ENCODE measurements at regions of chr11 and their contacts with region 1.

Region 1: GRCh38 chr11:17230867-17231851 is 23.4 kb upstream of the PIK3C2A start:
- DNase-seq: peak in 2 of 3 donors; percentile 29 to 39
- H3K4me3 ChIP-seq: no peak overlapping the region
- H3K27ac ChIP-seq: no peak overlapping the region
- H3K4me1 ChIP-seq: peaks cover 0 to 6% (median 3%) of the 10 kb centered on the region in 4 experiments
- H3K27me3 ChIP-seq: no peaks in the 10 kb centered on the region

Region 2: GRCh38 chr11:17116121-17116520 is 115.0 kb before region 1 on chr11:
- CTCF ChIA-PET with region 1: no interaction called
- POLR2A ChIA-PET with region 1: no interaction called
- DNase-seq: peak in 2 of 3 donors; percentile 6 to 10
- H3K4me3 ChIP-seq: no peak overlapping the region
- H3K27ac ChIP-seq: no peak overlapping the region
- H3K4me1 ChIP-seq: no peaks in the 10 kb centered on the region
- H3K27me3 ChIP-seq: no peaks in the 10 kb centered on the region

Region 3: GRCh38 chr11:17197431-17197898 is 33.7 kb before region 1 on chr11:
- CTCF ChIA-PET with region 1: no interaction called
- POLR2A ChIA-PET with region 1: no interaction called
- DNase-seq: no peak
- H3K4me3 ChIP-seq: no peak overlapping the region
- H3K27ac ChIP-seq: no peak overlapping the region
- H3K4me1 ChIP-seq: no peaks in the 10 kb centered on the region
- H3K27me3 ChIP-seq: no peaks in the 10 kb centered on the region

Region 4: GRCh38 chr11:17276236-17277023 is 45.3 kb after region 1 on chr11 and contains the start of gene NUCB2:
- CTCF ChIA-PET with region 1: interaction called, 11 read pairs
- POLR2A ChIA-PET with region 1: interaction called, 3 read pairs
- DNase-seq: peak; percentile 96 to 98 (median 98)
- H3K4me3 ChIP-seq: peak within 1 kb of the TSS; percentile 77 to 99 (median 93)
- H3K27ac ChIP-seq: peak within 1 kb of the TSS; percentile 86 to 93
- H3K4me1 ChIP-seq: peaks cover 26 to 76% (median 57%) of the 10 kb centered on the region in 4 experiments
- H3K27me3 ChIP-seq: no peaks in the 10 kb centered on the region

Region 5: DNA sequence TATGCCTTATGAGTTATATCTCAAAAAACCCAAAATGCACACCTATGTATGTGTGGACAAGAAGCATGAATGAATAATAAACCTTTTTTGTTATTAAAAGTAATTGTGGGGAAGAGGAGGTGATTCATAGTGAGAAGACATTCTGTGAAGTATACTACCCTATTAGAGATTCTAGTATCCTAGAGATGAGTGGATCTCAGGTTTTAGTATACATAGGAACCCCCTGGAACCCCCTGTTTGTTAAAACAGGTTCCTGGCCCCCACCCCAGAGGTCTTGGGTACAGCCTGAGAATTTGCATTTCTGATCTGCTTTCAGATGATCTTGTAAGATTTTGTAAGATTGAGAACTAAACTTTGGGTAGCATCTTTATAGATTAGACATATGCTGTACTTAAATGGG is 62.9 kb after region 1 on chr11:
- CTCF ChIA-PET with region 1: interaction called, 11 read pairs
- POLR2A ChIA-PET with region 1: no interaction called
- DNase-seq: no peak
- H3K4me3 ChIP-seq: no peak overlapping the region
- H3K27ac ChIP-seq: peak overlapping the region; percentile 6 to 28
- H3K4me1 ChIP-seq: peaks cover 0 to 34% (median 15%) of the 10 kb centered on the region in 4 experiments
- H3K27me3 ChIP-seq: no peaks in the 10 kb centered on the region

Region 6: DNA sequence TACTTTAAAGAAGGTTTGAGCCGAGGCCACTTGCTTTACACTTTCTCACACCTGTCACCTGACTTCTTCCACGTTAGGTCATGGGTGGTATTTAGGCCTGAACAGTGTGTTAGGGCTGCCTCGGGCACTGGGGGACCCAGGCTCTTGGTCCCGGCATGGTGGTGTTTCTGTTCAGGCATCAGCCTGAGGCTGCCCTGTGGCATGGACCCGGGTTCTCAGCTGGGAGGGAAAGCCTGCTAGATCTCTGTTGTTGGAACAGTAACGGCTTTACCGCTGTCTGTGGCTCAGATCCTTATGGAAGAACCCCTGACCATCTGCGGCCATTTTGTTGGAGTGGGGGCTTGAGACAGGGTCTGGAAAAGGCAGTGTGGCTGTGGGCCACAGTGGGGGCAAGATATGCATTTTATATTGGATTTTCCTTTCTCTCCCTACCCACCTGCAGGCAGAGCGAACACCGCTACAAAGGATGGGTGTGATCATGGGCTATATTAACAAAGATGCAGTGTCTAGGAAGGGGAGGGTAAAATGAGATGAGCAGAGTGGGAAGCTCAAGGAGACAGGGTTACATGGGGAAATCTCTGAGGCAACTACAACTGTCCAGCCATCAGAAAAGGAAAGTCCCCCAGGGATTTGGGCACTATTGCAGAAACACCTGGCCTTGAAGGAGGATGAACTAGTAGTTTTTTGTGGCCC is 158.9 kb after region 1 on chr11:
- CTCF ChIA-PET with region 1: no interaction called
- POLR2A ChIA-PET with region 1: no interaction called
- DNase-seq: no peak
- H3K4me3 ChIP-seq: peak overlapping the region in 3 of 7 experiments; percentile 60 to 76 (median 62)
- H3K27ac ChIP-seq: no peak overlapping the region
- H3K4me1 ChIP-seq: peaks cover 0 to 12% (median 7%) of the 10 kb centered on the region in 4 experiments
- H3K27me3 ChIP-seq: peaks cover 0 to 7% (median 0%) of the 10 kb centered on the region in 5 experiments

Region 7: DNA sequence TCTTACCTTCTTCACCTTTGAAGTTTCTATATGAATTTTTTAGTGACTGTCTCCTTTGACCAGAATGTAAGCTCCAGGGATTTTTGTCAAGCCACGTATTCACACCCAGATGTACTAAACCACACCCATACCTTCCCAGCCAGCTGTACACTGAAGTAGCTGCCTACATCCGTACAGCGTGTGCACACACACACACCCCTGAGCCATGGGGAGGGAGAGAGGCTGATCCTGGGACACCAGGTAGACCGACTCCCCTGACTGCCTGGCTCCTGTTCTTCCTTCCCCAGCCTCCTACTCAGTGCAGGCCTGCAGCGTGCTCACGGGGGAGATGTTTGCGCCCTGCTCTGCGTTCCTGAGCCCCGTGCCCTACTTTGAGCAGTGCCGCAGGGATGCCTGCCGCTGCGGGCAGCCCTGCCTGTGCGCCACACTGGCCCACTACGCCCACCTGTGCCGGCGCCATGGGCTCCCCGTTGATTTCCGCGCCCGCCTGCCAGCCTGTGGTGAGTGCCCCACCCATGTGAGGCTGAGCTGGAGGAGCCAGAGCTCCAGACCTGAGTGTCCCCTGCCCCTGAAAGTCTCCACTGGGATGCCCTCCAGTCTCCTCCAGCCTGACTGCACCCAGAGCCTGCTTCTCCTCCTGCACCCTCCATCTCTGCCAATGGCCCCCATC is 341.8 kb after region 1 on chr11:
- CTCF ChIA-PET with region 1: no interaction called
- POLR2A ChIA-PET with region 1: no interaction called
- DNase-seq: no peak
- H3K4me3 ChIP-seq: no peak overlapping the region
- H3K27ac ChIP-seq: no peak overlapping the region
- H3K4me1 ChIP-seq: peaks cover 0 to 7% (median 3%) of the 10 kb centered on the region in 4 experiments
- H3K27me3 ChIP-seq: peaks cover 0 to 5% (median 0%) of the 10 kb centered on the region in 5 experiments

Measured in common myeloid progenitor, CD34-positive (primary cell).